Naive thymus-derived CD4-positive, alpha-beta T cell (primary cell): ENCODE measurements at regions of chr20 and their contacts with region 1.

Region 1: DNA sequence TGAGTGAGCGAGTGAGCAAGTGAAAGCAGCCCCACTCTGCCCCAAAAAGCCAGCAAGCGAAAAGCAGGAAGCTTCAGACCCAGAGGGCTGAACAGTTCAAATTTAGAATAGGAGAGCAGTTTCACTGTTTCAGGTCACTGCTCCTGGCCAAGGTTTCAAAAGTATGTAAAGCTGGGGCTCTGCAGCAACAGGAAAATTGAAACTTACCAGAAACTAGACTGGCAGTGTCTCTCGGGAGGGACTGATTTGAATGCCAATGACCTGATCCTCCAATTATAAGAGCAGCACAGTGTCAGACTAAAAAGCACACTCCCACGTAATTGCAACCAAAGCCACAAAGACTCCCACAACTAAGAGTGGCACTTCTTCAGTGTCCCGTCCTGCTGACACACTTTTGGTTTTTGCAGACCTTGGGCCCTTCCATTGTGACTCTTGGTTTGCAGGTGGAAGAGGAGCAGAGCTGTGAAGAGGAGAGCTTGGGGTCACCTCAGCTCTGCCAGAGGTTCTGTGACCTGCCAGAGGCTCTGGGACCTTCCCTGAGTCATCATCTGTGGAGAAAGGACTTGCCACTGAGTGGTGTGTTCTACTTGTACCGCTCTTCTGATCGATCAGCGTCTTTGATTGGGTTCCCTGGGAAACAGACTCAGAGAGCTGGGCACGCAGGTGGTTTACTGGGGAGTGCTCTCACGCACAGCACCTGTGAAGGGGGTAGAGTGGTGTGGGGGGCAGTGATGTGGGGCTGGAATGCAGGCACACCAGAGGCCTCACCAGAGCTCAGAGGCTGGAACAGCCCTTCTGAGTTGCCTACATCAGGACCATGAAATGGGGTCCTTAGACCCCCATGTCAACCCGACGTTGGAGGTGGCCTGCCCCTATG is 52.7 kb upstream of the PTGIS start:
- DNase-seq: peak in 1 of 9 donors; percentile 33
- ATAC-seq: peak; percentile 37
- H3K4me3 ChIP-seq: no peak overlapping the region
- H3K4me3 Mint-ChIP-seq: no peak overlapping the region
- H3K27ac ChIP-seq: no peak overlapping the region
- H3K27ac Mint-ChIP-seq: no peak overlapping the region
- H3K4me1 ChIP-seq: peaks cover 0 to 8% of the 10 kb centered on the region in 2 donors
- H3K4me1 Mint-ChIP-seq: peaks cover 0 to 6% (median 0%) of the 10 kb centered on the region in 7 donors
- H3K27me3 ChIP-seq: no peaks in the 10 kb centered on the region
- H3K27me3 Mint-ChIP-seq: peaks cover 4 to 15% (median 6%) of the 10 kb centered on the region in 5 donors

Region 2: GRCh38 chr20:49668181-49668877 is 47.7 kb after region 1 on chr20:
- CTCF ChIA-PET with region 1: no interaction called
- POLR2A ChIA-PET with region 1: no interaction called
- intact Hi-C with region 1: loop called in 1 of 2 experiments (anchors 5 kb)
- DNase-seq: peak in 6 of 9 donors; percentile 1 to 50 (median 10)
- ATAC-seq: peak; percentile 92
- H3K4me3 ChIP-seq: no peak overlapping the region
- H3K4me3 Mint-ChIP-seq: peak overlapping the region in 7 of 10 donors; percentile 10 to 69 (median 27)
- H3K27ac ChIP-seq: no peak overlapping the region
- H3K27ac Mint-ChIP-seq: peak overlapping the region in 3 of 9 donors; percentile 28 to 80 (median 52)
- H3K4me1 ChIP-seq: peaks cover 0 to 36% of the 10 kb centered on the region in 2 donors
- H3K4me1 Mint-ChIP-seq: peaks cover 15 to 50% (median 26%) of the 10 kb centered on the region in 7 donors
- H3K27me3 ChIP-seq: no peaks in the 10 kb centered on the region
- H3K27me3 Mint-ChIP-seq: no peaks in the 10 kb centered on the region